PC-9 (cell line): ENCODE measurements at regions of chr5 and their contacts with region 1.

Region 1: DNA sequence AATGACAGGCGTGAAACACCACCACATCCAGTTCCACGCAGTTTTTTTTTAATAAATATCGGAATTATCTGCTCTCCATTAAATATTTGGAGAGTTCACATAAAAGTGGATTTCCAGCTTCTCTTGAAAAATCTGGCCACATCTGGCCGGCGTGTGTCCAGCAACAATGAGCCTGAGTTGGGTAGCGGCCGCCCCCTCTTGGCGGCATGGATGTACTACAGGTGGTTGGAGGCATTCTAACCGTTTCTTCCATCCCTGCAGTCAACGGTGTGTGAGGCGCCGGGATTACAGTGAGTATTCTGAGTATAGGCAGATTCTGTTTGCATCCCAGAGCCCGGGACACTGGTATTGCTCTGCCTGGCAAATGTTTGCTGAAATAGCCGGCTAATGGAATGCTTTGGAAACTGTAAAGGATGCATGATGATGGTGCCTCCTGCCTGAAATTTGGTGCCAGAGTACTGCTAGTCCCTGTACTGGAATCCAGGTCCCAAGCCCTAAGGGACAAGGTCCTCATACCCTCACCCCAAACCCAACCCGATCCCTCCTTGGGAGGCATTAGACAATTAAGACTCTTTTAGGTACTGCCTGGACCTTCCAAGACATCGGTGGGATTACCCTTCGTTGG is 13.6 kb upstream of the GM2A start:
- DNase-seq: peak in 1 of 2 experiments; percentile 63
- H3K4me3 ChIP-seq: no peak overlapping the region
- H3K27ac ChIP-seq: no peak overlapping the region
- H3K4me1 ChIP-seq: peaks cover 8% of the 10 kb centered on the region
- H3K27me3 ChIP-seq: 0 out of 2 replicates have a peak, but pooled peaks cover 4% of the 10 kb centered on the region
- CTCF ChIP-seq: peak; percentile 88

Region 2: GRCh38 chr5:150846654-150847333 is 392.6 kb before region 1 on chr5:
- CTCF ChIA-PET with region 1: no interaction called
- POLR2A ChIA-PET with region 1: no interaction called
- intact Hi-C with region 1: loop called (anchors 1 kb)
- DNase-seq: peak; percentile 38 to 63
- H3K4me3 ChIP-seq: no peak overlapping the region
- H3K27ac ChIP-seq: no peak overlapping the region
- H3K4me1 ChIP-seq: no peaks in the 10 kb centered on the region
- H3K27me3 ChIP-seq: peaks cover 2% of the 10 kb centered on the region; the same call in 1 of the 2 replicates
- CTCF ChIP-seq: peak; percentile 79

Region 3: GRCh38 chr5:151040211-151040747 is 199.1 kb before region 1 on chr5:
- CTCF ChIA-PET with region 1: interaction called, 14 read pairs
- POLR2A ChIA-PET with region 1: no interaction called
- intact Hi-C with region 1: no loop called
- DNase-seq: peak; percentile 63 to 85
- H3K4me3 ChIP-seq: no peak overlapping the region
- H3K27ac ChIP-seq: peak overlapping the region; percentile 89
- H3K4me1 ChIP-seq: peaks cover 47% of the 10 kb centered on the region
- H3K27me3 ChIP-seq: no peaks in the 10 kb centered on the region
- CTCF ChIP-seq: no peak

Region 4: DNA sequence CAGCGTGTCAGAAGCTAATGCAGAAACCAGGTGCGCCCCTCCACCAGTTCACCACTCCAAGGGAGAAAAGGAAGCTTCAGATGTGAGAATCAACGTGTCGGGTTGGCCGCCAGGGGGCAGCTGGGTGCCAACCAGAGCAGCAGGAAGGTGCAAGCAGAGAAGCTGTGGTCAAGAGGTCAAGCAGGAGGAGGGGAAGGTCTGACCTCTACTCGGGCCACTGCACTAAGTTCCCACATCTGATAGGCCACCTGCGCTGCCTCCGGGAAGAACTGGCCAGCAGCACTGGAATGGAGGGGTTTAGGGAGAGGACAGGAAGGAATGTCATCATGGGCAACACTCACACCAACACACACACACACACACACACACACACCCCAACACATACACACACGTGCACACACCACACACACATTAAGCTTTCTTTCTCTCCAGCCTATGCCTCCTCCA is 113.1 kb before region 1 on chr5:
- CTCF ChIA-PET with region 1: interaction called, 8 read pairs
- POLR2A ChIA-PET with region 1: no interaction called
- intact Hi-C with region 1: loop called (anchors 1 kb)
- DNase-seq: peak; percentile 46 to 64
- H3K4me3 ChIP-seq: no peak overlapping the region
- H3K27ac ChIP-seq: no peak overlapping the region
- H3K4me1 ChIP-seq: peaks cover 7% of the 10 kb centered on the region
- H3K27me3 ChIP-seq: no peaks in the 10 kb centered on the region
- CTCF ChIP-seq: peak; percentile 89

Region 5: GRCh38 chr5:151213800-151214613 is 25.3 kb before region 1 on chr5:
- CTCF ChIA-PET with region 1: interaction called, 12 read pairs
- POLR2A ChIA-PET with region 1: no interaction called
- intact Hi-C with region 1: no loop called
- DNase-seq: no peak
- H3K4me3 ChIP-seq: no peak overlapping the region
- H3K27ac ChIP-seq: no peak overlapping the region
- H3K4me1 ChIP-seq: no peaks in the 10 kb centered on the region
- H3K27me3 ChIP-seq: no peaks in the 10 kb centered on the region
- CTCF ChIP-seq: no peak